Sigmoid colon (tissue), 7 donors: ENCODE measurements at regions of chr22 and their contacts with region 1.

Region 1: GRCh38 chr22:35840302-35840739 is 122.6 kb downstream of the APOL5 start:
- DNase-seq: peak; percentile 94
- H3K4me3 ChIP-seq: peak overlapping the region; percentile 26 to 53 (median 46)
- H3K27ac ChIP-seq: peak overlapping the region; percentile 76 to 86 (median 82)
- H3K4me1 ChIP-seq: peaks cover 0 to 81% (median 52%) of the 10 kb centered on the region in 4 donors
- H3K27me3 ChIP-seq: no peaks in the 10 kb centered on the region
- CTCF ChIP-seq: no peak
- EP300 ChIP-seq: peak in 1 of 4 donors; percentile 3
- POLR2A ChIP-seq: peak in 1 of 2 donors; percentile 40

Region 2: DNA sequence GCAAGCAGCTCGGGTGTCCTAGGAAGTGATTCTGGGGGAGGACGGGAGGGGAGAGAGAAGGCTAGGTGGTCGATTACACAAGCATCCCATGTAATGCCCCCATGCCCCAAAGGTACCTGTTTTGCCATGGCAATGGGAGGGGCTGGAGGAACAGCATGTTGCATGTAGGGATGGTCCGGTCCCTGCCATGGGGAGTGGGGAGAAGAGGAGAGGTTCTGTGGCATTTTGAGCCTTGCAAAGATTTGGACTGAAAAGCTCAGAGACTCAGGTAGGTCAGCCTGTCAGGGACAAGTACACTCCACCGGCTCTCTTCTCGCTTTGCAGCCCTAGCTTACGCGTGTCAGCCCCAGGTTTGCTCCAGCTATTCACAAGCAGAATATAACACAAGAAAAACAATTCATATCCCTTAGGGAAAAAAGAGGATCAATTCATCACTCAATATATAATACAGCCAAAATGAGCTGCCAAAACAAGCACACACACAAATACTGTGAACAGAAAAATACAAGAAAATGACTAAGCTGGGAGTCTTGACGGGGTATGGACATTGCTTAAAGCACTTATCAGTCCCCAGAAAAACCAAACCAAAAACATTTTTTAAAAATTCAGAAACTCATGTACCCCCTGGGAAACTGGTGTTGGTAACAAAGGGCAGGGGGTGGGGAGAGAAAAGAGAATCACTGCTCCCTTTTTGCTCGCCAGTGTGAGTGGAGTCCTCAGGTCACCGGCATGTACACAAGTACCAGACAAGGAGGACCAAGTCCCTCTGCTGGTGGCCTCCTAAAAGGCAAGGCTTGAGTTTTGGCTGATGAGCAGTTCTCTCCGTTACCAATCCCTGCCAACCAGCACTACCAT is 101.0 kb before region 1 on chr22:
- intact Hi-C with region 1: no loop called
- DNase-seq: no peak
- H3K4me3 ChIP-seq: no peak overlapping the region
- H3K27ac ChIP-seq: no peak overlapping the region
- H3K4me1 ChIP-seq: peaks cover 0 to 8% (median 3%) of the 10 kb centered on the region in 4 donors
- H3K27me3 ChIP-seq: no peaks in the 10 kb centered on the region
- CTCF ChIP-seq: peak in 3 of 4 experiments; percentile 17 to 30 (median 29)
- EP300 ChIP-seq: no peak
- POLR2A ChIP-seq: no peak

Region 3: GRCh38 chr22:35892192-35892591 is 51.9 kb after region 1 on chr22:
- intact Hi-C with region 1: loop called (anchors 2 kb)
- DNase-seq: no peak
- H3K4me3 ChIP-seq: peak overlapping the region; percentile 38 to 53 (median 48)
- H3K27ac ChIP-seq: peak overlapping the region; percentile 84 to 90 (median 86)
- H3K4me1 ChIP-seq: peaks cover 0 to 66% (median 54%) of the 10 kb centered on the region in 4 donors
- H3K27me3 ChIP-seq: no peaks in the 10 kb centered on the region
- CTCF ChIP-seq: no peak
- EP300 ChIP-seq: no peak
- POLR2A ChIP-seq: no peak

Region 4: GRCh38 chr22:35905894-35906293 is 65.6 kb after region 1 on chr22:
- intact Hi-C with region 1: loop called (anchors 5 kb)
- DNase-seq: no peak
- H3K4me3 ChIP-seq: no peak overlapping the region
- H3K27ac ChIP-seq: no peak overlapping the region
- H3K4me1 ChIP-seq: peaks cover 0 to 45% (median 35%) of the 10 kb centered on the region in 4 donors
- H3K27me3 ChIP-seq: no peaks in the 10 kb centered on the region
- CTCF ChIP-seq: no peak
- EP300 ChIP-seq: no peak
- POLR2A ChIP-seq: no peak

Region 5: GRCh38 chr22:35921777-35922176 is 81.5 kb after region 1 on chr22:
- intact Hi-C with region 1: loop called (anchors 2 kb)
- DNase-seq: peak; percentile 90
- H3K4me3 ChIP-seq: no peak overlapping the region
- H3K27ac ChIP-seq: peak overlapping the region; percentile 71 to 87 (median 80)
- H3K4me1 ChIP-seq: peaks cover 0 to 65% (median 57%) of the 10 kb centered on the region in 4 donors
- H3K27me3 ChIP-seq: no peaks in the 10 kb centered on the region
- CTCF ChIP-seq: peak in 3 of 4 experiments; percentile 29 to 58 (median 50)
- EP300 ChIP-seq: no peak
- POLR2A ChIP-seq: no peak

Region 6: GRCh38 chr22:36010882-36011281 is 170.6 kb after region 1 on chr22:
- intact Hi-C with region 1: no loop called
- DNase-seq: no peak
- H3K4me3 ChIP-seq: no peak overlapping the region
- H3K27ac ChIP-seq: peak overlapping the region; percentile 55 to 67 (median 61)
- H3K4me1 ChIP-seq: peaks cover 0 to 91% (median 74%) of the 10 kb centered on the region in 4 donors
- H3K27me3 ChIP-seq: no peaks in the 10 kb centered on the region
- CTCF ChIP-seq: no peak
- EP300 ChIP-seq: peak in 1 of 4 donors; percentile 50
- POLR2A ChIP-seq: no peak

Region 7: GRCh38 chr22:36028646-36029405 is 188.5 kb after region 1 on chr22 and contains the start of gene RBFOX2:
- intact Hi-C with region 1: loop called (anchors 5 kb)
- DNase-seq: peak; percentile 99
- H3K4me3 ChIP-seq: peak within 1 kb of the TSS; percentile 64 to 95 (median 84)
- H3K27ac ChIP-seq: peak within 1 kb of the TSS; percentile 90 to 98 (median 97)
- H3K4me1 ChIP-seq: peaks cover 0 to 39% (median 27%) of the 10 kb centered on the region in 4 donors
- H3K27me3 ChIP-seq: no peaks in the 10 kb centered on the region
- CTCF ChIP-seq: no peak
- EP300 ChIP-seq: no peak
- POLR2A ChIP-seq: no peak
- total RNA-seq, gene RBFOX2: 138 to 164 (median 148) TPM

Region 8: DNA sequence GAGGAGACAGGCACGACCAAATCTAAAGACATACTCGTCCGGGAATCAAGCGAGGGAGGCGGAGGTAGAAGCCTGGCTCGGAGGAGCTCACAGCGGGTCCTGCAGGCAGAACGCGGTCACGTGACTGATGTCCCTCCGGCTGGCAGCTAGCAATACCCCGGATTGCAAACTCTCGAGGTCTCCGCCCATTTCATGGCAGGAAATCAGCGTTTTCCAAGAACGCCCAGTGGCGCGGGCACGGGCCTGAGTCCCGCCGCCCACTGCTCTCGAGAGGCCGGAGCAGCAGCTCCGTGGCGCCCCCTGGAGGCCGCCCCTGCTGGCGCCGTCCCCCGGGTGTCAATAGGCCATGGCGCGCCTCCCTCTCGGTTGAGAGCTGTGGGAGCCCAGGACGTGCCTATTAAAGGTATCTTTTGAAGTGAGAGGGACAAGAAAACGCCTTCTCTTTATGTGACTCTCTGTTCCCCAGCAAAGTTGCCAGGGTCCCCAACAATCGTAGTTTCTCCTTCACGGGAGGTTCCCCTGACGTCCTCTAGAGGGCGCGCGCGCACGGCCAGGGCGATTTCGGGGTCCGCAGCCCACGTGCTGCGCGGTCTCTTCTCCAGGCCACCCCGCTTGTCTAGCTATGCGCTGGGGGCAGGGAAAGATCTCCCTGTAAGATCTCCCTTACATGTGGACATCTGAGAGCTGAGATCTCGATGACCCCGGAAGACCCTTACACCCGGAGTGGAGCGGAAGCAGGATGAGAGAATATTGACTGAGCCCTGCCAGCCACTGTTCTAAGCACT is 225.6 kb after region 1 on chr22:
- intact Hi-C with region 1: loop called (anchors 5 kb)
- DNase-seq: peak; percentile 97
- H3K4me3 ChIP-seq: peak overlapping the region; percentile 21 to 59 (median 48)
- H3K27ac ChIP-seq: peak overlapping the region; percentile 83 to 95 (median 85)
- H3K4me1 ChIP-seq: peaks cover 0 to 20% (median 16%) of the 10 kb centered on the region in 4 donors
- H3K27me3 ChIP-seq: no peaks in the 10 kb centered on the region
- CTCF ChIP-seq: peak; percentile 100
- EP300 ChIP-seq: no peak
- POLR2A ChIP-seq: no peak